ENCODE measurements at regions of chr11 and their contacts with region 1.

Region 1: GRCh38 chr11:86218125-86219084 is 26.1 kb upstream of the EED start:
- DNase-seq: peak; percentile 82
- H3K4me3 ChIP-seq: peak overlapping the region in 1 of 3 experiments; percentile 3
- H3K27ac ChIP-seq: no peak overlapping the region
- H3K4me1 ChIP-seq: no peaks in the 10 kb centered on the region
- H3K27me3 ChIP-seq: peaks cover 1 to 12% of the 10 kb centered on the region in 2 experiments
- CTCF ChIP-seq: peak; percentile 86 to 91
- POLR2A ChIP-seq: no peak

Region 2: DNA sequence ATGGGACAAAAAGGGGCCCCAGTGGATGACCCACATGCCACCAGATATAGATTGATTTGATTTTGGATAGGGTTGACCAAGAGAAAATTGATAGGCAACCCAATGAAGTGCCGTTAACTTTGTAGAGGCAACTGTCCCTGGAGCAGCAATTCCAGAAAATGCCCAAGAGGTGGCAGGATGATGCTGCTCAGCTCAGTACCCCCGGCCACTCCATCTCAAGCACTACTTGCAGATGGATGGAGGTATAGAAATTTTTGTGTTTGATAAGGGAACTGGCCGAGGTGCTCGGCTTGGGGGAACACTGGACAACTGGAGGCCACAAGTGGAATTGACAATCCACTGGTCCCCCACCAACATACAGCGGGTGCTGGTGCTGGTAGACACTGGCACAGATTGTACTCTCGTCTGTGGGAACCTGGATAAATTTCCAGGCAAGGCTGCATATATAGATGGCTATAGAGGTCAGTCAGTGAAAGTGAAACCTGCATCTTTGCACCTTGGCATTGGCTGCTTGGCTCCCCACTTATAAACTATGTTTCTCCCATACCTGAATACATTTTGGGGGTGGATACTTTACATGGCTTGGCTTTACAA is 276.9 kb before region 1 on chr11:
- CTCF ChIA-PET with region 1: interaction called, 9 read pairs
- POLR2A ChIA-PET with region 1: no interaction called
- dilution Hi-C with region 1: no loop called
- intact Hi-C with region 1: loop called (anchors 1 kb)
- DNase-seq: peak; percentile 71
- H3K4me3 ChIP-seq: no peak overlapping the region
- H3K27ac ChIP-seq: no peak overlapping the region
- H3K4me1 ChIP-seq: peaks cover 12% of the 10 kb centered on the region
- H3K27me3 ChIP-seq: no peaks in the 10 kb centered on the region
- CTCF ChIP-seq: peak; percentile 76
- POLR2A ChIP-seq: no peak

Region 3: DNA sequence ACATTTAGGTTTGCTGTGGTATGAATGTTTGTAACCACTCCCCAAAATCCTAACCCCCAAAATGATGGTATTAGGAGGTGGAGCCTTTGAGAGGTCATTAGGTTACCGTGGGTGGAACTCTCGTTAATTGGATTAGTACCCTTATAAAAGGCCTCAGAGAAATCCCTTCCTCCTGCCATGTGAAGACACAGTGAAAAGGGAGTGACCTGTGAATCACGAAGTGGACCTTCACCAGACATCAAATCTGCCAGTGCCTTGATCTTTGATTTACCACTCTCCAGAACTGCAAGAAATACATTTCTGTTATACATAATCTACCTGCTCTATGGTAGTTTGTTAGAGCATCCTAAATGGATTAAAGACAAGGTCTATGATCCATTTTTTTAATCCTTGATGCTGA is 136.9 kb before region 1 on chr11:
- CTCF ChIA-PET with region 1: no interaction called
- POLR2A ChIA-PET with region 1: no interaction called
- dilution Hi-C with region 1: no loop called
- intact Hi-C with region 1: no loop called
- DNase-seq: no peak
- H3K4me3 ChIP-seq: no peak overlapping the region
- H3K27ac ChIP-seq: no peak overlapping the region
- H3K4me1 ChIP-seq: no peaks in the 10 kb centered on the region
- H3K27me3 ChIP-seq: no peaks in the 10 kb centered on the region
- CTCF ChIP-seq: no peak
- POLR2A ChIP-seq: no peak

Region 4: DNA sequence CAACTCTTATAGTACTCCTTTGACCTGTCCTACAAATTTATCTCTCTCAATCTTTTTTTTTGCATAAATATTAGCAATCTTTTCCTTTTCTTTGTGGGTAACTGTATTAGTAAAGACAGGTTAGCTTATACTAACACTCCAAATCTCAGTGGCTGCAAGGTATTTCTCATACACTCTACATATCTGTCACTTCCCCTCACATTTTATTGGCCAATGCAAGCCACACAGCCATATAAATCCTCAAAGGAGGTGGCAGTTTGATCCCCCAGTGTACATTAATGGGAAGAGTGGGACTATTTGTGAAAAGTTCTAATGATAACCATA is 16.4 kb before region 1 on chr11:
- CTCF ChIA-PET with region 1: interaction called, 21 read pairs
- POLR2A ChIA-PET with region 1: no interaction called
- dilution Hi-C with region 1: no loop called
- intact Hi-C with region 1: no loop called
- DNase-seq: no peak
- H3K4me3 ChIP-seq: peak overlapping the region in 1 of 3 experiments; percentile 53
- H3K27ac ChIP-seq: peak overlapping the region; percentile 30
- H3K4me1 ChIP-seq: peaks cover 9% of the 10 kb centered on the region
- H3K27me3 ChIP-seq: no peaks in the 10 kb centered on the region
- CTCF ChIP-seq: no peak
- POLR2A ChIP-seq: no peak

Region 5: DNA sequence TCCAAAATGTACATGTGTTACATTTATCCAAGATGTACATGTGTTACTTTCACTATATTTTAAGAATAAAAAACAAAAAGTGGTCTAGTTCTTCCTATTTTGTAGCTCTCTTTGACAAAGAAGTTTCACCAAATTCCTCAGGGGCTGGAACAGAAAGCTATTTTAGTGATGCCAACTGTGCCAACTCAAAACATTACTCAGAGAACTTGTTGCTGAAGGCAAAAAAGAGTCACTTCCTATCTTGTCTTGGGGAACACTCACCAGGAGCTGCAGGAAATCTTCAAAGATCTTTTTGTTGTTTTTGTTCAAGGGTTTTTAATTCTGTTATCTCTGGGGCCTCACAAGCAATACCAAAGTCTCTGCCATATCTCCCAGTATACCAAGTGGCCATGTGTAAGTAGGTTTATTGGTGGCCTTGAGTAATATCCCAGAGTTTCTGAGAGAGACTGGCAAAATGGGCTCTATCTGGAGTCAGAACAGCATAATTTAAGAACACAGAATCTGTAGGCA is 12.6 kb after region 1 on chr11:
- CTCF ChIA-PET with region 1: interaction called, 16 read pairs
- POLR2A ChIA-PET with region 1: no interaction called
- dilution Hi-C with region 1: no loop called
- intact Hi-C with region 1: no loop called
- DNase-seq: no peak
- H3K4me3 ChIP-seq: no peak overlapping the region
- H3K27ac ChIP-seq: no peak overlapping the region
- H3K4me1 ChIP-seq: no peaks in the 10 kb centered on the region
- H3K27me3 ChIP-seq: no peaks in the 10 kb centered on the region
- CTCF ChIP-seq: no peak
- POLR2A ChIP-seq: no peak